B cell (primary cell): ENCODE measurements at regions of chr10 and their contacts with region 1.

Region 1: DNA sequence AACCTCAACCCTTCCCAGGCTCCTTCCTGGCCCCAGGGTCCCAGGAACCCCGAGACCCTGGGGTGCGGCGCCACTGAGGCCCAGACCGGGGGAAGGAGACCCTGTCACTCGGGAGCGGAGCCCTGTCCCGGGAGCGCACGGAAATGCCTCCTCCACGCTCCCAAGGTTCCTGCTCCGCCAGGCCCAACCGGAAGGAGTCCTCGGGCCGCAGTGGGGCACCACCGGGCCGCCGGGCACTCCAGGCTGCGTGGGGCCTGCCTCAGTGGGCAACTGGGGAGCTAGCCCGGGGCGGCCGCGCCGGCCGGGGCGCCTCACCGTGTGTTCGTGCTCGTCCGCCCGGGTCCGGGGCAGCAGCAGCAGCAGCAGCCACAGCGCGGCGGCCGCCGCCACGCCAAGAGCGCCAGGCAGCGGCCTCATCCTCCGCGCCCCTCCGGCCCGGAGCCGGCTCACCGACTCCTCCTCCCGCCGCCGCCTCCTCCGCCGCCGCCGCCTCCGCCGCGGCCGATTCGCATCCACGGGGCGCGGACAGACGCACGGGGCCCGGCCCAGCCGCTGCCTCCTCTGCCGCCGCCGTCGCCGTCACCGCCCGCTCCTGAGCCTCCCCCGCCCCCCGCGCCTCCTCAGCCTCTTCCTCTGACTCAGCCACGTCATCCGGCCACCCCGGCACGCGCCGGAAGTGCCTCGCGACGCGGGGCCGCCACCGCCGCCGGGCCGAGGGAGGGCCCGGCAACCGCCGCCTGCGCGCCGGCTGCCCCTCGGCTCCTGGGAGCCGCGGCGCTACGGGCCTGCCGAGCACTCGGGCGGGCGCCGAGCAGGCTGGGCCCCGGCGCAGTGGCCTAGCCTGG is at the start of gene TM9SF3:
- DNase-seq: peak; percentile 96
- ATAC-seq: peak; percentile 87
- H3K4me3 ChIP-seq: peak within 1 kb of the TSS; percentile 69 to 97 (median 84)
- H3K4me3 Mint-ChIP-seq: peak within 1 kb of the TSS; percentile 91
- H3K27ac ChIP-seq: peak within 1 kb of the TSS; percentile 96 to 98
- H3K27ac Mint-ChIP-seq: peak within 1 kb of the TSS; percentile 99
- H3K4me1 ChIP-seq: peaks cover 24 to 40% of the 10 kb centered on the region in 2 donors
- H3K4me1 Mint-ChIP-seq: peaks cover 41% of the 10 kb centered on the region
- H3K27me3 ChIP-seq: no peaks in the 10 kb centered on the region
- H3K27me3 Mint-ChIP-seq: no peaks in the 10 kb centered on the region
- CTCF ChIP-seq: no peak
- total RNA-seq, gene TM9SF3: 62.8 and 63.4 TPM in 2 replicates

Region 2: GRCh38 chr10:95656291-95657164 is 930.1 kb before region 1 on chr10 and contains the start of gene ALDH18A1:
- CTCF ChIA-PET with region 1: no interaction called
- POLR2A ChIA-PET with region 1: no interaction called
- intact Hi-C with region 1: loop called (anchors 10 kb)
- DNase-seq: peak; percentile 96
- ATAC-seq: peak; percentile 95
- H3K4me3 ChIP-seq: peak within 1 kb of the TSS; percentile 0 to 74 (median 64)
- H3K4me3 Mint-ChIP-seq: peak within 1 kb of the TSS; percentile 98
- H3K27ac ChIP-seq: peak within 1 kb of the TSS in 1 of 2 donors; percentile 27
- H3K27ac Mint-ChIP-seq: peak within 1 kb of the TSS; percentile 93
- H3K4me1 ChIP-seq: peaks cover 7 to 13% of the 10 kb centered on the region in 2 donors
- H3K4me1 Mint-ChIP-seq: peaks cover 30% of the 10 kb centered on the region
- H3K27me3 ChIP-seq: no peaks in the 10 kb centered on the region
- H3K27me3 Mint-ChIP-seq: no peaks in the 10 kb centered on the region
- CTCF ChIP-seq: no peak
- total RNA-seq, gene ALDH18A1: 27.6 and 30.7 TPM in 2 replicates

Region 3: DNA sequence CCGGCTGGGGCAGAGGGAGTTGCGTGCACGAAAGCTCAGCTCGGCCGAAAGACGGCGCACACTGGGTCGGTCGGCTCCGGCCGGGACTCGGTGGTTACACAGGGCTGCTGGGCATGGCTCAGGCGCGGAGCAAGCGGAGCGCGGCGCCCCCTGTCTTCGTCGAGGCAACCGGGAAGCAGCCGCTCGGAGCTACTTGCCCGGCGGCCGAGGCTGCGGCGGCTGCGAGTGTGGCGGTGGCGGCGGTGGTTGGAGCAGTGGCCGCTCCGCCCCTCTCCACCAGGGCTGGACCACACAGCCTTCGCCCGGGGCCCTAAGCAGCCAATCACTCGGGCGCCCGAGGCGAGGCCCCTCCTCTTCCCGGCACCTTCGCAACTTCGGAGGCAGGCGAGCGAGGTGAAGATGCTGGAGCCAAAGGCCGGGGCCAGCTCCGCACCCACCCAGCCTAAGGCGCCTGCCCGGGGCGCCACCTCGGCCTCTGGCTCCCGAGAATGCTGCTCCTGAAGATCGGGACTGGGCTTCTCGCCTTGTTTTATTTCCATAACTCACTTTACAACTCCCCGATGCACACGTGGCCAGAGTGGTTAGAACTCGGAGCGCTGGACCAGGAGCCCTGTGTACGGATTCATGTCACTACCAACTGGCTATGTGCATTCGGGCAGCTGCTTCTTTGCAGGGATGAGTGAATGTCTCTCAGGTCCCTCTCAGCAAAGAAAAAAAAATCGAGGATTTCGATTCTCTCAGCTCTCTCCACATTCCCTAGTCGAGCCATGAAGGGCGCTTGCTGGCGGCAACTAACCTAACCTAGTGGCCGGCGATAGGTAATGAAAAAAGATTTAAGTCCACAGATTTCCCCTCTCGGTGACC is 72.7 kb before region 1 on chr10 and contains the start of gene TLL2:
- CTCF ChIA-PET with region 1: interaction called, 3 read pairs
- POLR2A ChIA-PET with region 1: no interaction called
- intact Hi-C with region 1: loop called (anchors 1 kb)
- DNase-seq: peak; percentile 80
- ATAC-seq: peak; percentile 85
- H3K4me3 ChIP-seq: peak within 1 kb of the TSS; percentile 11 to 86 (median 62)
- H3K4me3 Mint-ChIP-seq: peak within 1 kb of the TSS; percentile 89
- H3K27ac ChIP-seq: no peak within 1 kb of the TSS
- H3K27ac Mint-ChIP-seq: peak within 1 kb of the TSS; percentile 46
- H3K4me1 ChIP-seq: peaks cover 16 to 19% of the 10 kb centered on the region in 2 donors
- H3K4me1 Mint-ChIP-seq: peaks cover 23% of the 10 kb centered on the region
- H3K27me3 ChIP-seq: peaks cover 2 to 35% (median 9%) of the 10 kb centered on the region in 4 experiments
- H3K27me3 Mint-ChIP-seq: peaks cover 6% of the 10 kb centered on the region
- CTCF ChIP-seq: no peak
- total RNA-seq, gene TLL2: 0.47 and 0.51 TPM in 2 replicates

Region 4: DNA sequence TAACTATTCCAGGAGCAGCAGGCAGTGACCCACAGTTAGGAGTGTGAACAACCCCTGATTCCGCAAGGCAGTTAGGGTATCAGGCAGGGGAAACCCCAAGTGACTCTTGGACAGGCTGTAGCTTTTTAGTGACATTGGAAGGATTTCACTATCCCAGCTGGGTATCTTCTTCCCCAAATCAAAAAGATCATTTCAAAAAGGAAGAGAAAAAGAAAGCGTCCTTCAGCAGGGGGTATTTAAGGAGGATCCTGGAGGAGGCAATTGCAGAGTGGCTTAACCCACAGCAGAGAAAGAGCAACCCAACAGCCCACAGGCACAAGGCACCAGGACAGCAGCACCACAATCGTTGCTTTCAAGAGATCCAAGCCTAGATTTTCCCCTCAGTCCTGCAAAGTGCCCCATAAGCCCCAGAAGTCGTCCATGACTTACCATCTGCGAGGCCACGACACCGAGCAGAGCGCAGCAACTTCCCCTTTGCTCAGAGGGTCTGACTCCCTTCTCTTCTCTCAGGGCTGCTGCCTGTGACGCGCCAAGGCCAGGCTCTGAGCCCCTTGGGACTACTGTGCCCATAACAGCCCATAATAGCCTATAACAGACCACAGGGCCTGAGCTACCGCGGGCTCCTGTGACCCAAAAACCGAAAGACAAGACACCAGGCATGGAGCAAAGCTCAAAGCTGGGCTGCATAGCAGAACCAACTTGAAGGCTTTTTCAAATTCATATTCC is 113.9 kb after region 1 on chr10:
- CTCF ChIA-PET with region 1: no interaction called
- POLR2A ChIA-PET with region 1: no interaction called
- intact Hi-C with region 1: loop called (anchors 5 kb)
- DNase-seq: peak; percentile 95
- ATAC-seq: peak; percentile 94
- H3K4me3 ChIP-seq: peak overlapping the region; percentile 75 to 97 (median 82)
- H3K4me3 Mint-ChIP-seq: peak overlapping the region; percentile 98
- H3K27ac ChIP-seq: peak overlapping the region; percentile 88 to 92
- H3K27ac Mint-ChIP-seq: peak overlapping the region; percentile 96
- H3K4me1 ChIP-seq: peaks cover 76 to 81% of the 10 kb centered on the region in 2 donors
- H3K4me1 Mint-ChIP-seq: peaks cover 77% of the 10 kb centered on the region
- H3K27me3 ChIP-seq: no peaks in the 10 kb centered on the region
- H3K27me3 Mint-ChIP-seq: no peaks in the 10 kb centered on the region
- CTCF ChIP-seq: no peak

Region 5: DNA sequence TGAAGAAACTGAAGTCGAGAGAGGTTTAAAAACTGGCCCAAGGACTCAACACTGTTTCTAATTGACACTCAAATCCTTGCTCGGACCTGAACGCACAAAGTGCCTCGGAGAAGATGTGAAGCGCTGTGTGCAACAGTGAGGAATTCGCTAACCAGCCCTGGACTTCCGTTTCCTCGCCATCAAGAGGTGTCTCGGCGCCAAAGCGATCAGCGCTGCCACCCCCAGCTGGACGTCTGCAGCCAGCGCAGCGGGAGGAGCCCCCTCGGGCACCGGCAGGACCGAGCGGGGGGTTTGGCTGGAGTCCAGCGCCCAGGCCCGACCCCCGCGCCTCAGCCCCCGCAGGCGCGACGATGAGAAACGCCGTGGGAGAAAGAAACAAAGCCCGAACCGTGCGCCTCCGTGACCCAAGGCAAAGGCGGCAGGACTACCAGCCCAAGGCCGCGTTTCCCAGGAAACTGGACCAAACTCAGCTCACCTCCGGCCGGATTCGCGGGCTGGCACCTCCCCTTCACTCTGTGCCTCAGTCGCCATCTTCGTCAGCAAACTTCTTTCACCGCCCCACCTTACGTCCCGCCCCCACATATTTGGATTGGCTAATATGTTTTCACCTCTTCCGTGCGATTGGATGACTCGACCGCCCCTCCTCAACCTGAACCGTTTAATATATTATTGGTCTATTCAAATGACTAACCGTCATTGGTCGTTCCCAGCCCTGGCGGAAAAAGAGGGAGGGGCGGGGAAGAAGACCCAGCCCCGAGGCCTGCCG is 705.6 kb after region 1 on chr10 and contains the start of gene ARHGAP19:
- CTCF ChIA-PET with region 1: no interaction called
- POLR2A ChIA-PET with region 1: no interaction called
- intact Hi-C with region 1: loop called (anchors 2 kb)
- DNase-seq: peak; percentile 96
- ATAC-seq: peak; percentile 98
- H3K4me3 ChIP-seq: peak within 1 kb of the TSS; percentile 63 to 98 (median 91)
- H3K4me3 Mint-ChIP-seq: peak within 1 kb of the TSS; percentile 90
- H3K27ac ChIP-seq: peak within 1 kb of the TSS; percentile 48 to 85
- H3K27ac Mint-ChIP-seq: peak within 1 kb of the TSS; percentile 86
- H3K4me1 ChIP-seq: peaks cover 6 to 12% of the 10 kb centered on the region in 2 donors
- H3K4me1 Mint-ChIP-seq: peaks cover 16% of the 10 kb centered on the region
- H3K27me3 ChIP-seq: no peaks in the 10 kb centered on the region
- H3K27me3 Mint-ChIP-seq: no peaks in the 10 kb centered on the region
- CTCF ChIP-seq: no peak
- total RNA-seq, gene ARHGAP19: 21.7 and 22.5 TPM in 2 replicates